Gastrocnemius medialis (tissue), 4 donors: ENCODE measurements at regions of chr2 and their contacts with region 1.

Region 1: GRCh38 chr2:61117534-61117933 is 44.5 kb upstream of the C2orf74 start:
- DNase-seq: no peak
- ATAC-seq: no peak
- H3K4me3 ChIP-seq: no peak overlapping the region
- H3K27ac ChIP-seq: no peak overlapping the region
- H3K4me1 ChIP-seq: no peaks in the 10 kb centered on the region
- H3K27me3 ChIP-seq: no peaks in the 10 kb centered on the region
- CTCF ChIP-seq: no peak
- POLR2A ChIP-seq: no peak

Region 2: GRCh38 chr2:61135510-61135909 is 18.0 kb after region 1 on chr2:
- in situ Hi-C with region 1: no loop called
- intact Hi-C with region 1: loop called (anchors 2 kb)
- DNase-seq: no peak
- ATAC-seq: no peak
- H3K4me3 ChIP-seq: no peak overlapping the region
- H3K27ac ChIP-seq: no peak overlapping the region
- H3K4me1 ChIP-seq: no peaks in the 10 kb centered on the region
- H3K27me3 ChIP-seq: no peaks in the 10 kb centered on the region
- CTCF ChIP-seq: no peak
- POLR2A ChIP-seq: no peak

Region 3: DNA sequence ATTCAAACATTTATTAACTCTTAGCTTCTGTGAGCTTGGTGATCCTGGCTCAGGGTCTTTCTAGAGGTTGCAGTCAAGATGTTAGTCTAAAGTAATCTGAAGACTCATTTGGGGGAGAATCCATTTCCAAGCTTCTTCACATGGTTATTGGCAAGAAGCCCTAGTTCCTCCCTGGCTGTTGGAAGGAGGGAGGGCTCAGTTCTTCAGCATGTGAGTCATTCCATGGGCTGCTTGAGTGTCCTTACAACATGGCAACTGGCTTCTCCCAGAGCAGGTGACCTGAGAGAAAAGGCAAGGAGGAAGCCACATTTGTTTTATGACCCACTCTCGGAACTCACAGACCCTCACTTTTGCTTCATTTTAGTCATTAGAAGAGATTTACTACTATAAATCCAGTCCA is 33.9 kb after region 1 on chr2:
- in situ Hi-C with region 1: no loop called
- intact Hi-C with region 1: no loop called
- DNase-seq: no peak
- ATAC-seq: no peak
- H3K4me3 ChIP-seq: no peak overlapping the region
- H3K27ac ChIP-seq: no peak overlapping the region
- H3K4me1 ChIP-seq: no peaks in the 10 kb centered on the region
- H3K27me3 ChIP-seq: no peaks in the 10 kb centered on the region
- CTCF ChIP-seq: no peak
- POLR2A ChIP-seq: no peak

Region 4: GRCh38 chr2:61277756-61278155 is 160.2 kb after region 1 on chr2:
- in situ Hi-C with region 1: no loop called
- intact Hi-C with region 1: no loop called
- DNase-seq: no peak
- ATAC-seq: no peak
- H3K4me3 ChIP-seq: no peak overlapping the region
- H3K27ac ChIP-seq: no peak overlapping the region
- H3K4me1 ChIP-seq: no peaks in the 10 kb centered on the region
- H3K27me3 ChIP-seq: no peaks in the 10 kb centered on the region
- CTCF ChIP-seq: no peak
- POLR2A ChIP-seq: no peak